ENCODE measurements at regions of chr18 and their contacts with region 1.

Region 1: GRCh38 chr18:47917923-47918610 is 12.4 kb downstream of the SMAD2 start:
- DNase-seq: no peak
- H3K4me3 Mint-ChIP-seq: peak overlapping the region; percentile 66
- H3K27ac Mint-ChIP-seq: peak overlapping the region; percentile 96
- H3K4me1 Mint-ChIP-seq: peaks cover 86% of the 10 kb centered on the region
- H3K27me3 Mint-ChIP-seq: no peaks in the 10 kb centered on the region

Region 2: GRCh38 chr18:47901624-47902362 is 16.3 kb before region 1 on chr18:
- intact Hi-C with region 1: loop called (anchors 1 kb)
- DNase-seq: peak; percentile 22
- H3K4me3 Mint-ChIP-seq: peak overlapping the region; percentile 31
- H3K27ac Mint-ChIP-seq: peak overlapping the region; percentile 75
- H3K4me1 Mint-ChIP-seq: peaks cover 89% of the 10 kb centered on the region
- H3K27me3 Mint-ChIP-seq: no peaks in the 10 kb centered on the region